ENCODE measurements at regions of chr2 and their contacts with region 1.

Region 1: DNA sequence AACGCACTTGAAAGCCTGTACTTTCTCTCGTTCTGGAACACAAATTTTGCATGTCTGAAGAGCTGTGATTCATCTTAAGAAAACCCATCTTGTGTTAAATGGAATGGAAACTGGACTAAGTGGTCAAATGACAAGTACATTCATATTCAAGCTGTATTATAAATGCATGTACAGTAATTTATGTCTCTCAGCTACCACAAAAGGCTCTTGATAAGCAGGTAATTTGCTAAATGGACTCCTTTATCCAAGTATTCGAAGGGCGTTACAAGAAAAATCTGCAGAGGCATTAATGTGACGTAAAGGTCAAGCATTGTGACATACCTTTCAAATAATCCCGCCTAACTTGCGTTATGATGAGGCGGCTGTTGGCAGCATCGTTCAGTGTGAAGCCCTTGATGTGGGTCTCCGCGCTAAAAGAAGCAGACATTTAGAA is 66.6 kb downstream of the ABCG8 start:
- DNase-seq: no peak
- ATAC-seq: no peak
- H3K4me3 ChIP-seq: no peak overlapping the region
- H3K27ac ChIP-seq: no peak overlapping the region
- H3K4me1 ChIP-seq: no peaks in the 10 kb centered on the region
- H3K27me3 ChIP-seq: no peaks in the 10 kb centered on the region
- CTCF ChIP-seq: no peak

Region 2: GRCh38 chr2:43737097-43737854 is 168.1 kb before region 1 on chr2:
- intact Hi-C with region 1: no loop called
- DNase-seq: peak in 1 of 2 donors; percentile 25
- ATAC-seq: no peak
- H3K4me3 ChIP-seq: no peak overlapping the region
- H3K27ac ChIP-seq: no peak overlapping the region
- H3K4me1 ChIP-seq: no peaks in the 10 kb centered on the region
- H3K27me3 ChIP-seq: peaks cover 0 to 7% (median 0%) of the 10 kb centered on the region in 3 donors
- CTCF ChIP-seq: no peak

Region 3: GRCh38 chr2:43950383-43951008 is 45.1 kb after region 1 on chr2:
- intact Hi-C with region 1: loop called in 1 of 2 experiments (anchors 10 kb)
- DNase-seq: no peak
- ATAC-seq: peak in 1 of 4 donors; percentile 45
- H3K4me3 ChIP-seq: no peak overlapping the region
- H3K27ac ChIP-seq: no peak overlapping the region
- H3K4me1 ChIP-seq: no peaks in the 10 kb centered on the region
- H3K27me3 ChIP-seq: no peaks in the 10 kb centered on the region
- CTCF ChIP-seq: peak; percentile 28

Region 4: GRCh38 chr2:43960921-43961320 is 55.5 kb after region 1 on chr2:
- intact Hi-C with region 1: loop called (anchors 10 kb)
- DNase-seq: no peak
- ATAC-seq: no peak
- H3K4me3 ChIP-seq: no peak overlapping the region
- H3K27ac ChIP-seq: no peak overlapping the region
- H3K4me1 ChIP-seq: no peaks in the 10 kb centered on the region
- H3K27me3 ChIP-seq: no peaks in the 10 kb centered on the region
- CTCF ChIP-seq: no peak